ENCODE measurements at regions of chr5 and their contacts with region 1.

Region 1: GRCh38 chr5:128163991-128164390 is 80.4 kb downstream of the SLC12A2 start:
- DNase-seq: peak; percentile 46
- H3K4me3 ChIP-seq: no peak overlapping the region
- H3K27ac ChIP-seq: no peak overlapping the region
- H3K4me1 ChIP-seq: peaks cover 5% of the 10 kb centered on the region
- H3K27me3 ChIP-seq: no peaks in the 10 kb centered on the region
- CTCF ChIP-seq: no peak
- POLR2A ChIP-seq: no peak

Region 2: DNA sequence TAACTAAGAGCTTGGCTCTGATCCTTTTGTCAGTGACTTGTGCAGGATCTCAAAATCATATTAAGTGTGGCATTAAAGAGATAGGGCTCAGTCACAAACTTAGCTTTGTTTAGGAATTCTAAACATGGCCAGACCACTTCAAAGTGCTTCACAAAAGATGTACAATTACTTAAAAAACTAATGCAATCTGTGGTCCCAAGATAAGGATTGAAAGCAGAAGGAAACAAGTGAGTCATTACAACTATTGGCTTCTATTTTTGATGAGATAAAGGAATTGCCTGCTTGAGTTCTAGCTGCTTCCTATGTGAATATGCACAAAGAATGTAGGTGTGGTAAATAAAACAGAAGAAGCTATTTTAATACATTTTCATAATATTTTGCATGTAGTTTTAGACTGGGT is 125.3 kb before region 1 on chr5:
- CTCF ChIA-PET with region 1: no interaction called
- POLR2A ChIA-PET with region 1: no interaction called
- dilution Hi-C with region 1: no loop called
- intact Hi-C with region 1: no loop called
- DNase-seq: peak; percentile 94
- H3K4me3 ChIP-seq: no peak overlapping the region
- H3K27ac ChIP-seq: peak overlapping the region; percentile 87
- H3K4me1 ChIP-seq: peaks cover 29% of the 10 kb centered on the region
- H3K27me3 ChIP-seq: no peaks in the 10 kb centered on the region
- CTCF ChIP-seq: no peak
- POLR2A ChIP-seq: peak; percentile 83

Region 3: GRCh38 chr5:128174951-128175350 is 11.0 kb after region 1 on chr5:
- CTCF ChIA-PET with region 1: no interaction called
- POLR2A ChIA-PET with region 1: no interaction called
- dilution Hi-C with region 1: no loop called
- intact Hi-C with region 1: loop called (anchors 2 kb)
- DNase-seq: no peak
- H3K4me3 ChIP-seq: no peak overlapping the region
- H3K27ac ChIP-seq: no peak overlapping the region
- H3K4me1 ChIP-seq: no peaks in the 10 kb centered on the region
- H3K27me3 ChIP-seq: no peaks in the 10 kb centered on the region
- CTCF ChIP-seq: no peak
- POLR2A ChIP-seq: no peak

Measured in endothelial cell of umbilical vein (primary cell).